ENCODE measurements at regions of chr10 and their contacts with region 1.

Region 1: DNA sequence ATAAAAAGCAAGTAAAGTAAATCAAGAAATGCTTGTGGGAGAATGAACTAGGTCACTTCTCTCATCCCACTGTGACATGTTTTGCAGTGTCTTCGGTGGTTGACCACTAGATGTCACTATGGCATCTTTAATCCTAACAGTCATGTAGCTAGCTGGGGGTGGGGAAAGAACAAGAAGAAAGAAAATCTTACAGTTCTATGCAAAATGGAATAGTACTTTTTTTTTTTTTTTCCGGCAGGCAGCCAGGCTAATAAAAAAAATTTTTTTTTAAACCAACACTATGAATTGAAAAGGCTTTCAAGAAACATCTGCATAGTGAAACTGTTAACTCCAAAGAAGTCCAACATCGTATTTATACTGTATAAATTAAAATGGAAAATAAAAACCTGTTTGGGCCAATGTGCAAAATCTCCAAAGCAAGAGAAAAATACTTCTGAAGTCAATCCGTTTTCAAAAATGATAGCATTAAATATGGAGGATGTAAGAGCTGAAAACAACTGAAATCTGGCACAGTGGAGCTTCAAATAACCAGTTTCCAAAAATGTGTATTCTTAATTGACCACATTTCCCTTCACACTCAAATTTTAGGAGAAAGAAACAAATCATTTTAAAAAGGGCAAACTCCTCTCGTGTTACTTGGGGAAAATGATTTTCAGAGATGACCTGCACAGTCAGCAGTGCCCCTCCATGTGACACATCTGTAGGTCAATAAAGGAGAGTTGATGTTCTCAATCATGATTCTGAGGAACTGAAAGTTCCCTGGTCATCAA is 38.5 kb downstream of the CDK1 start:
- DNase-seq: peak; percentile 42
- ATAC-seq: peak; percentile 86
- H3K4me3 Mint-ChIP-seq: no peak overlapping the region
- H3K27ac Mint-ChIP-seq: no peak overlapping the region
- H3K4me1 Mint-ChIP-seq: no peaks in the 10 kb centered on the region
- H3K27me3 Mint-ChIP-seq: no peaks in the 10 kb centered on the region

Region 2: GRCh38 chr10:60834401-60834800 is 17.6 kb after region 1 on chr10:
- CTCF ChIA-PET with region 1: interaction called, 3 read pairs
- POLR2A ChIA-PET with region 1: no interaction called
- intact Hi-C with region 1: loop called in 1 of 2 experiments (anchors 2 kb)
- DNase-seq: no peak
- ATAC-seq: no peak
- H3K4me3 Mint-ChIP-seq: no peak overlapping the region
- H3K27ac Mint-ChIP-seq: no peak overlapping the region
- H3K4me1 Mint-ChIP-seq: no peaks in the 10 kb centered on the region
- H3K27me3 Mint-ChIP-seq: peaks cover 3% of the 10 kb centered on the region

Region 3: DNA sequence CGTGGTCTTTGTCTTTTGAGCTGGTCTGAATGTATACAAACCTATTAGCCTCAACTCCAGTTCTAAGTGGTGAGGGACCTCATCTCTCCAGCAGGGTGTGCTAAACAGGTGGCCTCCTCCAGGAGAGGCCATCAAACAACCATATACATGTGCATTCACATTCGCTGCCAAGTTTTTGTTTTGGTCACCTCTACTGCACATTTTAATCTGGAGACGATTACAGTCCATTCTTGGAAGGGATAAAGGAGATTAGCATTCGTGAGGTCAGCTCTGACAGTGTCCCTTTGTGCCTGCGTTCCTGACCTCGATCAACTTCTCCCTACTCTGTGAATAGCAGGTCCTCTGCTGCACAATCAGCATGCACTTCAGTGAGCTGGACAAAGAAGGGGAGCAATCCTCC is 66.4 kb after region 1 on chr10:
- CTCF ChIA-PET with region 1: no interaction called
- POLR2A ChIA-PET with region 1: no interaction called
- intact Hi-C with region 1: no loop called
- DNase-seq: peak; percentile 13
- ATAC-seq: peak; percentile 33
- H3K4me3 Mint-ChIP-seq: no peak overlapping the region
- H3K27ac Mint-ChIP-seq: no peak overlapping the region
- H3K4me1 Mint-ChIP-seq: no peaks in the 10 kb centered on the region
- H3K27me3 Mint-ChIP-seq: no peaks in the 10 kb centered on the region

Region 4: GRCh38 chr10:60937784-60938654 is 121.2 kb after region 1 on chr10:
- CTCF ChIA-PET with region 1: no interaction called
- POLR2A ChIA-PET with region 1: no interaction called
- intact Hi-C with region 1: no loop called
- DNase-seq: no peak
- ATAC-seq: no peak
- H3K4me3 Mint-ChIP-seq: no peak overlapping the region
- H3K27ac Mint-ChIP-seq: no peak overlapping the region
- H3K4me1 Mint-ChIP-seq: peaks cover 5% of the 10 kb centered on the region
- H3K27me3 Mint-ChIP-seq: peaks cover 22% of the 10 kb centered on the region

Region 5: DNA sequence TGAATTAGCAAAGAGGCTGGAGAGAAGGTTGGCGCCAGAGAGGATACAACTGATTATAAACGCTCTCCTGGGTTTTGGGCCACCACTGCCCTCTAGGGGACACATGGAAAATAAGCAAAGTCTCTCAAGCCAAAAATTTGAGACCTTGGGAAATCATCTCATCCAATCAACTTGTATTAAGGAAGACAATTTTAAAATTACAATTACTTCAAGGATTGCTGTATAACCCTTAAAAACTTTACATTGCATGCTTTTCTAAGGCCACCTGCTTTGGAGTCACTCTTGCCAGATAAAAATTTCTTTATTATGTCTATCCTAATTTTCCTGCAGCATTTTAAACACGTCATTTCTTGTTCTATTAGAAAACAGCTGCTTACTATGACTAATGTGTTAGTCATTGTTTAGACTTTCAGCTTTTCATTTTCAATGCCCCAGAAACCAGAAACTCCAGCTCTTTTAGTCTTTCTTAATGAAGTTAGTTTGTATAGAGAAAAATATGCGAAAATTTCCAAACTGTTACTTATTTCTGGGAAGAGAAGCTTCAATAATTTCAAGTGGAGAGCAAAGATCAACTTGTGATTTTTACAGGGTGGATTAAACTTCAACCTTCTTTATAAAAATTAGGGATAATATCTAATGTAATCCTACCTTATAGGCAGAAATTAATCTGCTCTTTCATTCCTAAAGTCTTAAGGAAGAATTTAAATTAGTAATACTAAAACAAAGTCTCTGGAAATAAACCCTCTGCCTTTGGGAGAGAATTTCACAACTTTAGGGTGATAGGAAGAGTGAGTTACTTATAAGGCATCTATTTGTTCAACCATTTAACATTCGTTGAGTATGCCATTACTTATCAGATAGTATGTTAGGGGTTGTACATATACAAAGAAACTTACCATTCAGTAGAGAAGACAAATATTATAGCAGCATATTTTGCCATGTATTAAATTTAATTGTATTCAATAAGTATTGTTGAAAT is 147.7 kb after region 1 on chr10:
- CTCF ChIA-PET with region 1: interaction called, 11 read pairs
- POLR2A ChIA-PET with region 1: no interaction called
- intact Hi-C with region 1: loop called (anchors 1 kb)
- DNase-seq: peak; percentile 70
- ATAC-seq: peak; percentile 69
- H3K4me3 Mint-ChIP-seq: no peak overlapping the region
- H3K27ac Mint-ChIP-seq: no peak overlapping the region
- H3K4me1 Mint-ChIP-seq: peaks cover 32% of the 10 kb centered on the region
- H3K27me3 Mint-ChIP-seq: peaks cover 11% of the 10 kb centered on the region

Region 6: DNA sequence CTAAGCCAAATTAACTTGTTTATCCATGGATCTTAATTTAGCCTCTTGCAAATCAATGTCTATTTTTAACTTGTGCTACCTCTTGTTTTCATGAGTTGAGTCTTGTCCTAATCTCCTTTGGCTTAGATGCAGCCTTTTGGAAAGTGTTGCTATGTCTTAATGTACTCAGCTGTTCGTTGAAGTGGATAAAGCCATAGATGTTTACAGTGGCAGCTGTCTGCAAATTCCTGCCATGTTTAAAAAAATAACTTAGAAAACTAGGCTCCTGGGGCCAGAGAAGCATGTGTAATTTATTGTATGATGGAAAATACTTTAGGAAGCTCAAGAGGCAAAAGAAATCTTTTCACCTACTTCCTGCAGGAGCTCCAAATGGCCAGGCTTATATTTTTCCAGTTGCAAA is 380.2 kb after region 1 on chr10:
- CTCF ChIA-PET with region 1: interaction called, 4 read pairs
- POLR2A ChIA-PET with region 1: no interaction called
- intact Hi-C with region 1: loop called in 1 of 2 experiments (anchors 10 kb)
- DNase-seq: no peak
- ATAC-seq: no peak
- H3K4me3 Mint-ChIP-seq: no peak overlapping the region
- H3K27ac Mint-ChIP-seq: no peak overlapping the region
- H3K4me1 Mint-ChIP-seq: no peaks in the 10 kb centered on the region
- H3K27me3 Mint-ChIP-seq: peaks cover 4% of the 10 kb centered on the region

Region 7: DNA sequence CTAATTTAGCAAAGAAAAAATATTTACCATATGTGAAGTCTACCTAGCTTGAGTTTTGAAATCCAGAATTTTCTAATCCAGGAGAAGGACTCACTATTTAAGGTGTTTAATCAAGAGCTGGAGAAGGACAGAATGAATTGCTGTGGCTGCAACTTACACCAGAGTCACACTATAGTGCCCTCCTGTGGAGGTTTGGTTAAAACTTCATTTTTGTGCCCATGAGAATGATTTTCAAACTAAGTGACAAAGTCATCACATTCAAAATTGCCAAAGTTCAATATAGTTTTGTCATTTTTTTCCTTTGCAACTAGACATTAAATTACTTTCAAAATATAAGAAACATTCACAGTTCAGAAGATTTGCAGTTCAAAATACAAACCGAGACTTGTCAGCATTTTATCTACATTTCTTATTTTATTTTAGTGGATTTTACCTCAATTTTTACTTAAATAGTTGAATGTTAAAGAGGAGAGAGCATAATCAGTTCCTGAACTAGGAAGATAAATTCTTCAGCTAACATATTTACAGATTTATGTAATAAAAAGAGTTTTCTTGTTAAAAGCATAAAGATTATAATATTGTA is 916.6 kb after region 1 on chr10:
- CTCF ChIA-PET with region 1: no interaction called
- POLR2A ChIA-PET with region 1: no interaction called
- intact Hi-C with region 1: loop called in 1 of 2 experiments (anchors 2 kb)
- DNase-seq: peak; percentile 19
- ATAC-seq: no peak
- H3K4me3 Mint-ChIP-seq: no peak overlapping the region
- H3K27ac Mint-ChIP-seq: no peak overlapping the region
- H3K4me1 Mint-ChIP-seq: no peaks in the 10 kb centered on the region
- H3K27me3 Mint-ChIP-seq: peaks cover 15% of the 10 kb centered on the region